Kidney (tissue), 22 donors: ENCODE measurements at regions of chr11 and their contacts with region 1.

Region 1: DNA sequence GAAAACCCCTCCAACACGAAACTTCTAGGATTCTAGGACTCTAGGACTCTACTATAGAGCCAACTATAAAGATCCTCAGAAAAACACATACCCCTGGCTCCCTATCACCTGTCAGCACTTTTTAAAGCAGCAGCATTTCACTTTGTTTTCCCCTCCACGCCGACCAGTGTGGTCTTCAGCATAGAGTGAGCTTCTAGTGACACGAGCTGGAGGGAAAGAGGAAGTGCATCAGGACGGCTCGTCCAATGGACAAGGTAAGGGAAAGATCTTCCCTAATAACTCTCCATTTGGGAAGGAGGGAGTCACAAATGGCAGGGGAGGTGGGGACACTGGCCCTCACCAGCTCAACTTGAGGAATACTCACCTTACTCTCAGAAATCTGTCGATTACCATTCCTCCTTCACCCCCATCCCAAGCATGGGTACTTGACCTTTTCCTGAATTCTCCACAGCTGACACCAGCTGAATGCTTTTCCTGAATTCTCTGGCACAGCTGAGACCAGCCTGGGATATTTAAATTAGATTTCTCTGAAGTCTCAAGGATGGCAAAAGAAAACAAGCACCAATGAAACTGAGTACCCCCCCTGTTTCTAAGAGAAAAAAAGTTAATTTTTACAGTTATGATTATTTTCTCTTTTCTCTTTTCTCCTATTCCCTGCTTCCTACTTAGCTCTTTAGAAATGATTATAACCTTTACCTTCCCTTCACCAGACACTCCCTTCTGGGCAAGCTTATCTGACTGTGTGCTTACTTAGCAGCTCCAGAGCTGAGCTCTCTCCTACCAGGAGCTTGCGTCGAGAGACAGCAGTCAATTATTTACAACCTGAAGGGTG is 33.3 kb upstream of the NNMT start:
- DNase-seq: peak in 3 of 5 donors; percentile 58 to 84 (median 70)
- H3K4me3 ChIP-seq: no peak overlapping the region
- H3K27ac ChIP-seq: no peak overlapping the region
- H3K4me1 ChIP-seq: peaks cover 0 to 15% (median 5%) of the 10 kb centered on the region in 3 donors
- H3K27me3 ChIP-seq: peaks cover 2% of the 10 kb centered on the region
- CTCF ChIP-seq: peak; percentile 65

Region 2: GRCh38 chr11:113896156-113896879 is 366.6 kb before region 1 on chr11:
- intact Hi-C with region 1: loop called (anchors 10 kb)
- DNase-seq: peak in 3 of 5 donors; percentile 46 to 71 (median 62)
- H3K4me3 ChIP-seq: no peak overlapping the region
- H3K27ac ChIP-seq: no peak overlapping the region
- H3K4me1 ChIP-seq: no peaks in the 10 kb centered on the region
- H3K27me3 ChIP-seq: no peaks in the 10 kb centered on the region
- CTCF ChIP-seq: peak; percentile 66

Region 3: GRCh38 chr11:113994077-113994954 is 268.6 kb before region 1 on chr11:
- intact Hi-C with region 1: loop called (anchors 5 kb)
- DNase-seq: peak in 4 of 5 donors; percentile 12 to 44 (median 14)
- H3K4me3 ChIP-seq: no peak overlapping the region
- H3K27ac ChIP-seq: no peak overlapping the region
- H3K4me1 ChIP-seq: no peaks in the 10 kb centered on the region
- H3K27me3 ChIP-seq: peaks cover 5% of the 10 kb centered on the region
- CTCF ChIP-seq: peak; percentile 63

Region 4: GRCh38 chr11:114036156-114036811 is 226.6 kb before region 1 on chr11:
- intact Hi-C with region 1: loop called (anchors 10 kb)
- DNase-seq: peak; percentile 76 to 93 (median 79)
- H3K4me3 ChIP-seq: peak overlapping the region in 1 of 3 donors; percentile 57
- H3K27ac ChIP-seq: no peak overlapping the region
- H3K4me1 ChIP-seq: peaks cover 0 to 6% (median 5%) of the 10 kb centered on the region in 3 donors
- H3K27me3 ChIP-seq: no peaks in the 10 kb centered on the region
- CTCF ChIP-seq: peak; percentile 86

Region 5: GRCh38 chr11:114348200-114349191 is 85.6 kb after region 1 on chr11:
- intact Hi-C with region 1: no loop called
- DNase-seq: peak in 3 of 5 donors; percentile 35 to 82 (median 75)
- H3K4me3 ChIP-seq: no peak overlapping the region
- H3K27ac ChIP-seq: no peak overlapping the region
- H3K4me1 ChIP-seq: peaks cover 0 to 8% (median 0%) of the 10 kb centered on the region in 3 donors
- H3K27me3 ChIP-seq: no peaks in the 10 kb centered on the region
- CTCF ChIP-seq: peak; percentile 49